Aorta (tissue), 5 donors: ENCODE measurements at regions of chr9 and their contacts with region 1.

Region 1: GRCh38 chr9:113622600-113623400 is 159.3 kb downstream of the RGS3 start:
- DNase-seq: peak; percentile 79 to 90
- ATAC-seq: peak; percentile 2
- H3K4me3 ChIP-seq: no peak overlapping the region
- H3K27ac ChIP-seq: peak overlapping the region in 1 of 2 donors; percentile 41
- H3K4me1 ChIP-seq: no peaks in the 10 kb centered on the region
- H3K27me3 ChIP-seq: no peaks in the 10 kb centered on the region

Region 2: DNA sequence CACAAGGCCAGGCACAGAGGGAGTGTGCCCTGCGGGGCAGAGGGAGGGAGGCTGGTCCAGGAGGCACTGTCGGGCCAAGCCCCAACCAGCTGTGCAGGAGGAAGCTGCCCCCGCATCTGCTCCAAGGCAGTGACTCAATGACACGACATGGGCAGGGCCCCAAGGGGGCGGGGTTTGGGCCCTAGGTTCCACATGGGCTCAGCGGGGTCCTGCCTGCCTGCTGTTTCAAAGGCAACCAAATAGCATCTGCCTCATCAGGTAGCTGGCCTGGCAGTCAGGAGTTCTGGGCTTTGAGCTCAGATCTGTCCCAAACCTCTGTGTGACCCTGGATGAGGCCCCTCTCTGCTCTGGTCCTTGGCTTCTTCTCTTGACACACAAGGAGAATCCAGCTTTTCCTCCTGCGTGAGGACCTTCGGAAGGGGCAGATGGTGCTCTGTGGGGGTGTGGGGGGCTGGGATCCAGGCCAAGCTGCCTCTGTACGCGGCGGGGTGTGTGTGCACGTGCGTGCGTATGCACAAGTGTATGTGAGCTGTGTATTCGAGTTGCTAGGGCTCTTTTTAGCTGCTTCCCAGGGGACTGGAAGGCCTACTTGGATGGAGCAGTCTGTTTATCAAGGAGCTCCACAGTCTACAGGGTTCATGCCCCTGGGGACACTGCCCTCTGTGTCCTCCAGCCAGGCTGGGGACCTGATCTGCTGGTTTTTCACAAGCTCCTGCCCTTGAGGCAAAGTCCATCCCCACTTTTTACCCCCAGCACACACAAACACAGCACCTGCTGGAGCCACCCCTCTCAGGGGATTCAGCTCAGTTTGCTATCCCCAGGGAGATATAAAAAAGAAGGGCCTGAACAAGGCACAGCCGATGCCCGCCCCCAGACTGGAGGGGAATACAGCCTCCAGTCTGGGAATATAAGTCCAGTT is 20.4 kb before region 1 on chr9:
- intact Hi-C with region 1: loop called in 1 of 2 experiments (anchors 2 kb)
- DNase-seq: peak; percentile 94 to 97
- ATAC-seq: peak; percentile 83
- H3K4me3 ChIP-seq: no peak overlapping the region
- H3K27ac ChIP-seq: peak overlapping the region; percentile 23 to 43
- H3K4me1 ChIP-seq: peaks cover 2 to 14% of the 10 kb centered on the region in 2 donors
- H3K27me3 ChIP-seq: no peaks in the 10 kb centered on the region

Region 3: GRCh38 chr9:113650207-113651131 is 27.7 kb after region 1 on chr9:
- intact Hi-C with region 1: loop called in 1 of 2 experiments (anchors 2 kb)
- DNase-seq: no peak
- ATAC-seq: no peak
- H3K4me3 ChIP-seq: no peak overlapping the region
- H3K27ac ChIP-seq: no peak overlapping the region
- H3K4me1 ChIP-seq: no peaks in the 10 kb centered on the region
- H3K27me3 ChIP-seq: no peaks in the 10 kb centered on the region

Region 4: DNA sequence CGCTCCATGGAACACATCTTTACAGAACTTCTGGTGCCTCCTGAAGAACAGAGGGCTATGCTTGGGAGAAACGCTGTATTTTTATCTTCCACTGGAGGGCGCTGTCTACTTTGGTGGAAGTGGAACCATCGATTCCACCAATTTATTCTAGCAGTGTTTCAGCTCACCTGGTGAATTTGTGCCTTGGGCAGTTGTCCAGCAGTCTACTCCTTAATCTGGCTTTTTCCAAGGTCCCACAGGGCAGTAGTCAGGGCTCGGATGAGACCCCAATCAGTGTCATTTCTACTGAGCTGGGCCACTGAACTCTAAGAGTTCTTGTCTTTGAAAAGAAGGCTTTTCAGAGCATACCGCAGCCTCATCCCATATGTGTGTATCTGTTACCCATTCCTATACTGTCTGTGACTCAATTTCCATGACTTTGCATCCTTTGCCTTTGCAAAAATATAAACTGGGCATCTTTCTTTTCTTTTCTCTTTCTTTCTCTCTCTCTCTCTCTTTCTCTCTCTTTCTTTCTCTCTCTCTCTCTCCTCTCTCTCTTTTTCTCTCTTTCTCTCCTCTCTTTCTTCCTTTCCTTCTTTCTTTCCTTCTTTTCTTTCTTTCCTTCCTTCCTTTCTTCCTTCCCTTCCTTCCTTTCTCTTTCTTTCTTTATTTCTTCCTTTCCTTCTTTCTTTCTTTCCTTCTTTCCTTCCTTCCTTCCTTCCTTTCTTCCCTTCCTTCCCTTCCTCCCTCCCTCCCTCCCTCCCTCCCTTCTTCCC is 114.9 kb after region 1 on chr9:
- intact Hi-C with region 1: no loop called
- DNase-seq: no peak
- ATAC-seq: peak; percentile 56
- H3K4me3 ChIP-seq: no peak overlapping the region
- H3K27ac ChIP-seq: no peak overlapping the region
- H3K4me1 ChIP-seq: no peaks in the 10 kb centered on the region
- H3K27me3 ChIP-seq: no peaks in the 10 kb centered on the region

Region 5: DNA sequence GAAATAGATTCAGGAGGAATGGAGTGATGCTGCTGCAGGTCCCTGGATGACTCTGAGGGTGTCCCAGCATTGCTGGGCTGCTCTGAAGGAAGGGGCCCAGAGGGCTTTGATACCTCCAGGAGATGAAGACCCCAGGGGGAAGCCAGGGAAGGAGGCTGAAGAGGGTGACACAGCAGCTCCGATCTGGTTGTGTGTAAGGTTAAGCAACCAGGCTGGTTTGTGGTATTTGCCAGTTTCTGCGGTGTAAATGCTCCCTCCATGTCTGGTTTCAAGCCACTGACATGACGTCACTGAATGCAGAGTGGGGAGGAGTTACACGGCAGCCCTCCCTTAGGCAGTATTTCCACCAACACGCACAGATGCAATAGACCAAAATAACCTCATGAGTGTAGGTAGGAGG is 660.1 kb after region 1 on chr9:
- intact Hi-C with region 1: no loop called
- DNase-seq: peak; percentile 16 to 36
- ATAC-seq: no peak
- H3K4me3 ChIP-seq: no peak overlapping the region
- H3K27ac ChIP-seq: no peak overlapping the region
- H3K4me1 ChIP-seq: no peaks in the 10 kb centered on the region
- H3K27me3 ChIP-seq: no peaks in the 10 kb centered on the region